HepG2 (cell line): ENCODE measurements at regions of chr14 and their contacts with region 1.

Region 1: GRCh38 chr14:63174760-63175211 is 29.5 kb upstream of the RHOJ start:
- DNase-seq: peak; percentile 45
- ATAC-seq: peak; percentile 66
- H3K4me3 ChIP-seq: no peak overlapping the region
- H3K27ac ChIP-seq: no peak overlapping the region
- H3K4me1 ChIP-seq: no peaks in the 10 kb centered on the region
- H3K27me3 ChIP-seq: no peaks in the 10 kb centered on the region
- CTCF ChIP-seq: peak; percentile 67
- EP300 ChIP-seq: no peak
- POLR2A ChIP-seq: no peak
- RAD21 ChIP-seq: no peak

Region 2: DNA sequence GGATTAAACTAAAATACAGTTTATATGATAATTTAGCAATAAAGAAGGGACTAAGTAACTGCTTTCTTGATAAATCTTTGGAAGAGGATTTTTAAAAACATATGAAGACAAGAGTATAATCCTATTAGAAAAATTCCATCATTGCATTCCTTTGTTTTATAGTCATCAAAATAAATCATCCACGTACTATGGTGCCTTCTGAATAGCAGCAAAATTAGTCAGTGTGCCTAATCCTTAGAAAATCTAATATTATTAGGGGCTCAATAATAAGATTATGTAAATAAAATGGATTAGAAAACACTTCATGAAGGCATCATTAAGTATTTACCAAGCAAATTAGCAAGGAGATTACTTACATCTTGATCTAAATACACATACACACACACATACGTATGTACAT is 231.6 kb before region 1 on chr14:
- CTCF ChIA-PET with region 1: no interaction called
- POLR2A ChIA-PET with region 1: no interaction called
- in situ Hi-C with region 1: no loop called
- intact Hi-C with region 1: no loop called
- DNase-seq: no peak
- ATAC-seq: no peak
- H3K4me3 ChIP-seq: no peak overlapping the region
- H3K27ac ChIP-seq: no peak overlapping the region
- H3K4me1 ChIP-seq: no peaks in the 10 kb centered on the region
- H3K27me3 ChIP-seq: no peaks in the 10 kb centered on the region
- CTCF ChIP-seq: no peak
- EP300 ChIP-seq: no peak
- POLR2A ChIP-seq: no peak
- RAD21 ChIP-seq: no peak

Region 3: DNA sequence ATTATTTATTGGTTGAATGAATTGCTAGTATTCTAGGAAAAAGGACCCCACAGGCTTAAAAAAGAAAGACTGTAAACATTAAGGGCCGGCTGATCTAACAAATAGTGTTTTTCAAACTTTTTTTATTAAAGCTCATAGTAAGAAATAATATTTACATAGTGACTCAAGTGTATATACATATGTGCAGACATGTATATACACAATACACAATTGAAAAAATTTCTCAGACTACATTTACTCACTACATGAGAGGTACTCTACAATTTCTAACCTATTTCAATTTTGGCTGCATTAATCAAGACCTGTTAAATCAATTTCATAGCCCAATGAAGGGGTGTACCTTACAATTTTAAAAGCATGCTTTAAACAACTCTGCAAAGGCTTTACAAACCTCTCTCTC is 147.1 kb before region 1 on chr14:
- CTCF ChIA-PET with region 1: no interaction called
- POLR2A ChIA-PET with region 1: no interaction called
- in situ Hi-C with region 1: no loop called
- intact Hi-C with region 1: no loop called
- DNase-seq: no peak
- ATAC-seq: no peak
- H3K4me3 ChIP-seq: no peak overlapping the region
- H3K27ac ChIP-seq: no peak overlapping the region
- H3K4me1 ChIP-seq: no peaks in the 10 kb centered on the region
- H3K27me3 ChIP-seq: no peaks in the 10 kb centered on the region; a peak in 1 of 5 replicates
- CTCF ChIP-seq: no peak
- EP300 ChIP-seq: no peak
- POLR2A ChIP-seq: no peak
- RAD21 ChIP-seq: no peak

Region 4: DNA sequence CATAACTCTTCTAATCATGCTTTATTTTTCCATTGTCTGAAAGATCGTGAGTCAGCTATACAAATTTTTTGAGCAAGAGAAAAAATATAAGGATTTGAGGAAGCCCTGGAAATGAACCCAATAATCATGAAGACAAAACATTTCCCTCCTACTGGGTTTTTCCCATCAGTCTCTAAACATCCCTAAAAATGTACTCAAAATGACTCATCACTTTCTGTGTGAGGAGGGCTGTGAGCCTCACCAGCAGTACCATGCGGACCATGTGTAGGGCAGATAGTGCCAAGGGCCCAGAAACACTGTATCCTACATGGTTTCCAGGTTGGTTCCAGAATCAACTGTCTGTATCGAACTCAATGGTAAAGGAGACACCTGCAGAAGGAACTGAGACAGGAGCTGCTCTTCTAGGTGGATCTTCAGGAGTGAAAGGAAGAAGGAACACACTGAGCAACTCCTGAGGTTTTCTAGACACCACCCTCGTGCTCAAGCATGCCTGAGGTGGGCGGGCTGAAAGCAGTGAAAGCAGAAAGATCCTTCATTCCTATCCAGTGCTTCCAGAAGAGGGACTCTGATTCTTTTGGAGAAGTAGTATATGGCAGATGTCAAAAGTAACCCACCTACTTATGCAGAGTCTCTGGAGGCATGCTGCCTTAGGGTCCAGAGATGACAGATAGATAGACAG is 19.1 kb before region 1 on chr14:
- CTCF ChIA-PET with region 1: no interaction called
- POLR2A ChIA-PET with region 1: no interaction called
- in situ Hi-C with region 1: no loop called
- intact Hi-C with region 1: no loop called
- DNase-seq: no peak
- ATAC-seq: no peak
- H3K4me3 ChIP-seq: no peak overlapping the region
- H3K27ac ChIP-seq: no peak overlapping the region
- H3K4me1 ChIP-seq: no peaks in the 10 kb centered on the region
- H3K27me3 ChIP-seq: no peaks in the 10 kb centered on the region
- CTCF ChIP-seq: no peak
- EP300 ChIP-seq: no peak
- POLR2A ChIP-seq: no peak
- RAD21 ChIP-seq: no peak

Region 5: GRCh38 chr14:63276492-63277342 is 101.9 kb after region 1 on chr14:
- CTCF ChIA-PET with region 1: interaction called, 27 read pairs
- POLR2A ChIA-PET with region 1: no interaction called
- in situ Hi-C with region 1: loop called (anchors 5 kb)
- intact Hi-C with region 1: no loop called
- DNase-seq: peak; percentile 17
- ATAC-seq: peak; percentile 62
- H3K4me3 ChIP-seq: no peak overlapping the region
- H3K27ac ChIP-seq: no peak overlapping the region
- H3K4me1 ChIP-seq: no peaks in the 10 kb centered on the region
- H3K27me3 ChIP-seq: no peaks in the 10 kb centered on the region; a peak in 1 of 5 replicates
- CTCF ChIP-seq: peak; percentile 76
- EP300 ChIP-seq: no peak
- POLR2A ChIP-seq: no peak
- RAD21 ChIP-seq: peak; percentile 71

Region 6: DNA sequence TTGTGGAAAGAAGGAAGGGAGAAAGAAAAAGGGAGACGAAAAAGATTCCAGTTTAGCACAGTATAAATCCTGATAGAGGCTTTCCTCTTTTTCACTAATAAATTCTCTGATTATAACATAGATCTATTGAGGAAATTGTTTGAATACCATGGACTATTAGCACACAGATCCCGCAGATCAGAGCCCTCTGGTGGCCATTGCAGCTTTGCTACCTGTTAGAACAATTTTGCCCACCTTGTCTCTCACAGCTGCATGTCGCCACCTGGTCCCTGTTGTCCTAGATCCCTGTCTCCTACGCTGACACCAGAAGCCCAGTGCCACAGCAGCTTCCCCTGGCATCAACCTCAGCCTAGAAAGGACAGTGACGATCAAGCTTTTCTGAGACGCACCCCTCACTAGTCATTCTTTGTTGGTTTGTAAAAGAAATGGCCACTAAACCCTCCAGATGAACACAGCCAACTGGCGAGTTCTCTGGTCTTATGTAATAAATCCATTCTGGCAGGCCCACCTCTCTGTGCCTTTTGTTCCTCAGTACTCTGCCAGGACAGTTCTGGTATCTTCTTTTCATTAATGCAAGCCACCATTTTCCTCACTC is 134.0 kb after region 1 on chr14:
- CTCF ChIA-PET with region 1: no interaction called
- POLR2A ChIA-PET with region 1: no interaction called
- in situ Hi-C with region 1: no loop called
- intact Hi-C with region 1: loop called (anchors 1 kb)
- DNase-seq: peak; percentile 40
- ATAC-seq: peak; percentile 90
- H3K4me3 ChIP-seq: no peak overlapping the region
- H3K27ac ChIP-seq: no peak overlapping the region
- H3K4me1 ChIP-seq: no peaks in the 10 kb centered on the region
- H3K27me3 ChIP-seq: peaks cover 0 to 17% of the 10 kb centered on the region in 2 experiments; a peak in 2 of 5 replicates
- CTCF ChIP-seq: peak; percentile 58
- EP300 ChIP-seq: no peak
- POLR2A ChIP-seq: no peak
- RAD21 ChIP-seq: no peak